ENCODE measurements at regions of chr1 and their contacts with region 1.

Region 1: GRCh38 chr1:215710036-215710898 is 143.2 kb downstream of the KCTD3 start:
- DNase-seq: peak; percentile 93
- ATAC-seq: peak; percentile 70
- H3K4me3 ChIP-seq: no peak overlapping the region
- H3K27ac ChIP-seq: no peak overlapping the region
- H3K4me1 ChIP-seq: 0 out of 2 replicates have a peak, but pooled peaks cover 3% of the 10 kb centered on the region
- H3K27me3 ChIP-seq: peaks cover 27% of the 10 kb centered on the region
- CTCF ChIP-seq: peak; percentile 99

Region 2: DNA sequence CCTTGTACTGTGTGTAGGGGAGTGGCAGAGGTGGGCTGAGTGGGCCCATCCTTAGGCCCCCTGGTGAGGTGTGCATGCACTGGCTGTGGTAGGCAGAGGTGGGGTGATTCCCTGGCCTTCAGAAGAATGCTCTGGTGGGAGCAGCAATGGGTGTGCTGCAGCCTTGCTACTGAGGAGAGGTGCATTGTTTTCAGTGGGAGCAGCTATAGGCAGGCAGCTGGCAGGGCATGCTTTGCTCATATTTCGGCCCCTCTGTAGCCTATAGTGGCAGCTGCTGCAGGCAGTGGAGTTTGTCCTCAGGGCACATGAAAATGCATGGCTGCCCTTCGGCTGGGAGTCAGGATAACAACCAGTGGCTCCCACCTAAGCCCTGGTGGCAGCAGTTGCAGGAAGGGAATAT is 153.3 kb before region 1 on chr1:
- CTCF ChIA-PET with region 1: no interaction called
- POLR2A ChIA-PET with region 1: no interaction called
- intact Hi-C with region 1: no loop called
- DNase-seq: no peak
- ATAC-seq: no peak
- H3K4me3 ChIP-seq: no peak overlapping the region
- H3K27ac ChIP-seq: no peak overlapping the region
- H3K4me1 ChIP-seq: no peaks in the 10 kb centered on the region
- H3K27me3 ChIP-seq: no peaks in the 10 kb centered on the region
- CTCF ChIP-seq: no peak

Region 3: GRCh38 chr1:215786997-215787396 is 76.7 kb after region 1 on chr1:
- CTCF ChIA-PET with region 1: no interaction called
- POLR2A ChIA-PET with region 1: no interaction called
- intact Hi-C with region 1: loop called (anchors 2 kb)
- DNase-seq: peak; percentile 84
- ATAC-seq: peak; percentile 87
- H3K4me3 ChIP-seq: no peak overlapping the region
- H3K27ac ChIP-seq: peak overlapping the region; percentile 4; the same call in 1 of the 2 replicates
- H3K4me1 ChIP-seq: peaks cover 22% of the 10 kb centered on the region
- H3K27me3 ChIP-seq: peaks cover 21% of the 10 kb centered on the region
- CTCF ChIP-seq: no peak